ENCODE measurements at regions of chr12 and their contacts with region 1.

Region 1: DNA sequence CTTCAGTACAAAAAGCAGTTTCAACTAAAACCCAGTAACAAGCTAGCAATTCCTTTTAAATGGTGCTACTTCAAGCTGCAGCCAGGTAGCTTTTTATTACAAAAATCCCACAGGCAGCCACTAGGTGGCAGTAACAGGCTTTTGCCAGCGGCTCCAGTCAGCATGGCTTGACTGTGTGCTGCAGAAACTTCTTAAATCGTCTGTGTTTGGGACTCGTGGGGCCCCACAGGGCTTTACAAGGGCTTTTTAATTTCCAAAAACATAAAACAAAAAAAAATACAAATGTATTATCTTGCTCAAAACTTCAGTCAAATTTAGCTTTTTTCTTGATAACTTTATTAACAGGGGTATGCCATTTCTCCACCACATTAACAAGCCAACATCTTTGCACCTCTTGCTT is 3.6 kb upstream of the CLEC4E start:
- DNase-seq: peak; percentile 35
- ATAC-seq: peak; percentile 91
- H3K4me3 ChIP-seq: no peak overlapping the region
- H3K27ac ChIP-seq: no peak overlapping the region
- H3K4me1 ChIP-seq: no peaks in the 10 kb centered on the region
- H3K27me3 ChIP-seq: no peaks in the 10 kb centered on the region; the same call in 1 of the 2 replicates
- CTCF ChIP-seq: peak; percentile 49 to 88 (median 82); a peak in 5 of 6 replicates
- POLR2A ChIP-seq: no peak
- RAD21 ChIP-seq: peak; percentile 66

Region 2: GRCh38 chr12:7856516-7856915 is 687.8 kb before region 1 on chr12:
- CTCF ChIA-PET with region 1: no interaction called
- POLR2A ChIA-PET with region 1: no interaction called
- RAD21 ChIA-PET with region 1: no interaction called
- intact Hi-C with region 1: no loop called
- DNase-seq: no peak
- ATAC-seq: no peak
- H3K4me3 ChIP-seq: no peak overlapping the region
- H3K27ac ChIP-seq: no peak overlapping the region
- H3K4me1 ChIP-seq: peaks cover 0 to 23% of the 10 kb centered on the region in 2 experiments; a peak in 2 of 4 replicates
- H3K27me3 ChIP-seq: no peaks in the 10 kb centered on the region
- CTCF ChIP-seq: no peak
- POLR2A ChIP-seq: no peak
- RAD21 ChIP-seq: no peak

Region 3: GRCh38 chr12:8156845-8157244 is 387.4 kb before region 1 on chr12 and contains the start of gene ZNF705A:
- CTCF ChIA-PET with region 1: no interaction called
- POLR2A ChIA-PET with region 1: no interaction called
- RAD21 ChIA-PET with region 1: no interaction called
- intact Hi-C with region 1: no loop called
- DNase-seq: no peak
- ATAC-seq: no peak
- H3K4me3 ChIP-seq: no peak within 1 kb of the TSS
- H3K27ac ChIP-seq: no peak within 1 kb of the TSS
- H3K4me1 ChIP-seq: peaks cover 0 to 10% of the 10 kb centered on the region in 2 experiments; a peak in 2 of 4 replicates
- H3K27me3 ChIP-seq: no peaks in the 10 kb centered on the region
- CTCF ChIP-seq: no peak
- POLR2A ChIP-seq: no peak
- RAD21 ChIP-seq: no peak
- total RNA-seq, gene ZNF705A: not detected

Region 4: GRCh38 chr12:8499616-8500015 is 44.7 kb before region 1 on chr12:
- CTCF ChIA-PET with region 1: interaction called, 12 read pairs
- POLR2A ChIA-PET with region 1: no interaction called
- RAD21 ChIA-PET with region 1: no interaction called
- intact Hi-C with region 1: no loop called
- DNase-seq: no peak
- ATAC-seq: no peak
- H3K4me3 ChIP-seq: no peak overlapping the region
- H3K27ac ChIP-seq: no peak overlapping the region
- H3K4me1 ChIP-seq: no peaks in the 10 kb centered on the region
- H3K27me3 ChIP-seq: peaks cover 51% of the 10 kb centered on the region
- CTCF ChIP-seq: peak in 1 of 3 experiments; percentile 23; a peak in 1 of 6 replicates
- POLR2A ChIP-seq: no peak
- RAD21 ChIP-seq: no peak; the same call in 1 of the 2 replicates

Region 5: GRCh38 chr12:8554451-8555195 is 10.3 kb after region 1 on chr12:
- CTCF ChIA-PET with region 1: interaction called, 20 read pairs
- POLR2A ChIA-PET with region 1: no interaction called
- RAD21 ChIA-PET with region 1: no interaction called
- intact Hi-C with region 1: no loop called
- DNase-seq: no peak
- ATAC-seq: peak; percentile 14; the same call in 1 of the 2 replicates
- H3K4me3 ChIP-seq: no peak overlapping the region
- H3K27ac ChIP-seq: no peak overlapping the region
- H3K4me1 ChIP-seq: peaks cover 0 to 7% of the 10 kb centered on the region in 2 experiments; a peak in 2 of 4 replicates
- H3K27me3 ChIP-seq: no peaks in the 10 kb centered on the region
- CTCF ChIP-seq: no peak
- POLR2A ChIP-seq: no peak
- RAD21 ChIP-seq: no peak

Region 6: DNA sequence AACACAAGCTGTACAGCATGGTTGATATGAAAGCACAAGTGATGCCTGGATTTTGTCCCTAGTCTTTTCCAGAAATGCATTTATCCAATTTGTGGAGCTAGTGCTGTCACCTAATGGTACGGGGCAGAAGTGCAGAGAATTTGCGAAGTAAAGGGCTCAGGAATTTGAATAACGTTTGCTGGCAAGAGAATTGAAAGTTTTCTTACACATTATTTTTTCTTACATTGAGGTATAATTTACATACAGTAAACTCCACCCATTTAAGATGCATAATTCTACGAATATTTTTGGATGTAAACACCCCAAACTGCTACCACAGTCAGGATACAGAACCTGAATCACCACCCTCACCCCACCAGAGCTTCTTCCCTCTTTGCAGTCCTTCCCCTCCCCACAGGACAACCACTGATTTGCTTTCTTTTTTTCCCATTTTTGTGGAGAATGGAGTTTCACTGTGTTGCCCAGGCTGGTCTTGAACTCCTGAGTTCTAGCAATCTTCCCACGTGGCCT is 64.8 kb after region 1 on chr12:
- CTCF ChIA-PET with region 1: interaction called, 51 read pairs
- POLR2A ChIA-PET with region 1: no interaction called
- RAD21 ChIA-PET with region 1: interaction called, 10 to 12 read pairs
- intact Hi-C with region 1: loop called (anchors 2 kb)
- DNase-seq: peak; percentile 35
- ATAC-seq: peak; percentile 87
- H3K4me3 ChIP-seq: no peak overlapping the region
- H3K27ac ChIP-seq: no peak overlapping the region
- H3K4me1 ChIP-seq: no peaks in the 10 kb centered on the region
- H3K27me3 ChIP-seq: no peaks in the 10 kb centered on the region
- CTCF ChIP-seq: peak; percentile 64 to 86 (median 76)
- POLR2A ChIP-seq: no peak
- RAD21 ChIP-seq: peak; percentile 70

Region 7: GRCh38 chr12:8796831-8797626 is 252.7 kb after region 1 on chr12:
- CTCF ChIA-PET with region 1: no interaction called
- POLR2A ChIA-PET with region 1: no interaction called
- RAD21 ChIA-PET with region 1: no interaction called
- intact Hi-C with region 1: no loop called
- DNase-seq: no peak
- ATAC-seq: no peak
- H3K4me3 ChIP-seq: no peak overlapping the region
- H3K27ac ChIP-seq: no peak overlapping the region
- H3K4me1 ChIP-seq: no peaks in the 10 kb centered on the region
- H3K27me3 ChIP-seq: no peaks in the 10 kb centered on the region
- CTCF ChIP-seq: no peak
- POLR2A ChIP-seq: no peak
- RAD21 ChIP-seq: no peak

Region 8: DNA sequence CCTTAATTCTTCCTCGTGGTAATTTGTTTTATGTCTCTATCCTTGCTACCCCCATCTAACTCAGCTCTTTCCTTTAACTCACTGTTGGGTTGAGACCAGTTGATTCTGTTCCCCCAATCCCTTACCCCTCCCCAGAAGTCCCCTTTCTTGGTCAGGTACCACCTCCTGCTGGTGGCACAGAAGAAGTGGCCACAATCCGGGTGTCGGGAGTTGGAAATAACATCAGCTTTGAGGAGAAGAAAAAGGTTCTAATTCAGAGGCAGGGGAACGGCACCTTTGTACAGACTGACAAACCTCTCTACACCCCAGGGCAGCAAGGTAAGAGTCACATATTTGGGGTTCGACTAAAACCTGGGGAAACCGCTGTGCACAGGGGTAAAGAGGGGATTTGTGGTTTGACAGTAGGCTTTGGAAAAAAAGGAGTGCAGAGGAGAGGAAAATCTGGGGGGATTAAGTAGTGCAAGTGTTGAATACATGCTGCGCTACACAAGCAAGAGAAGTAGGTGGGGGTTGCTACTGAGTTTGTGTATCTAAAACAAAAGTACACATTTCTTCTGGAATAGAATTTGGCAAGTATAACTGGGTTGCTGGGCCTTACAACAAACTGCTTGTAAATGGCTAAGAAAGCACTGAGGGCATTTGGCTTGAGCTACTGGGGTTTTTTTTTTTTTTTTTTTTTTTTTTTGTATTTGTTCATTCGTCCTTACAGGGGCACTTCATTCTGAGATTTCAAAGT is 279.4 kb after region 1 on chr12:
- CTCF ChIA-PET with region 1: interaction called, 8 read pairs
- POLR2A ChIA-PET with region 1: no interaction called
- RAD21 ChIA-PET with region 1: no interaction called
- intact Hi-C with region 1: loop called (anchors 10 kb)
- DNase-seq: peak; percentile 6
- ATAC-seq: peak; percentile 81
- H3K4me3 ChIP-seq: no peak overlapping the region
- H3K27ac ChIP-seq: no peak overlapping the region
- H3K4me1 ChIP-seq: no peaks in the 10 kb centered on the region
- H3K27me3 ChIP-seq: no peaks in the 10 kb centered on the region
- CTCF ChIP-seq: peak; percentile 37 to 74 (median 63); a peak in 5 of 6 replicates
- POLR2A ChIP-seq: no peak
- RAD21 ChIP-seq: peak; percentile 66

Region 9: DNA sequence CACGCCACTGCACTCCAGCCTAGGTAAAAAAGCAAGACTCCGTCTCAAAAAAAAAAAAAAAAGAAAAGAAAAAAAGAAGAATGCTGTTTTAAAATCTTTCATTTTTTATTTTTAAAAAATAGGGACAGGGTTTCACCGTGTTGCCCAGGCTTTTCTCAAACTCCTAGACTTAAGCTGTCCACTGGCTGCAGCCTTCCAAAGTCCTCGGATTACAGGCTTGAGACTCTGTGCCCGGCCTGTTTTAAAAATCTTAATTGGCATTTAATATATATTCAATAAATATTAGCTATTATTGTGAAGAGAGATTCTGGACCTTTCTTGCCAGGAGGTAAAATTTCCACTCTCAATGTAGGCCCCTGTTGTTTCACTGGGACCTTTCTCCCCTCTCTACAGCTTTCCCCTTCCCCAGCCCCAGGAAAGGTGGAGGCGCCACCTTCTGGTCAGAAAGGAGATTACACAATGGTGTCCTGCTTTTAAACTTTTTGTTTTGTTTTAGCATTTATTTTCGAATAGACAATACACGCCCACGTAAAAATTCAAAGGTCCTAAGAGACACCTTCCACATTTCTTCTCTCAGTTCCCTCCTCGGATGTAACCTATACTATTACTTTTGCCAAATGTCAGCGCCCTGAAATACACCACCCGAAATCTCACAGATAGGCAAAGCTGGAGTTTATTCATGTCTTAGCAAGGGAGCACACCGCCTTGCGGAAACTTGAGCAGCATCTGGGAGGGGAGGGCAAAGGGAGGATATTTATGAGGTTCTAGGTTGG is 346.2 kb after region 1 on chr12:
- CTCF ChIA-PET with region 1: interaction called, 22 read pairs
- POLR2A ChIA-PET with region 1: no interaction called
- RAD21 ChIA-PET with region 1: no interaction called
- intact Hi-C with region 1: loop called (anchors 5 kb)
- DNase-seq: no peak
- ATAC-seq: peak; percentile 88
- H3K4me3 ChIP-seq: peak overlapping the region; percentile 44 to 55
- H3K27ac ChIP-seq: no peak overlapping the region
- H3K4me1 ChIP-seq: peaks cover 0 to 4% of the 10 kb centered on the region in 2 experiments; a peak in 1 of 4 replicates
- H3K27me3 ChIP-seq: no peaks in the 10 kb centered on the region
- CTCF ChIP-seq: peak; percentile 80 to 83 (median 82)
- POLR2A ChIP-seq: no peak
- RAD21 ChIP-seq: peak; percentile 72

Region 10: DNA sequence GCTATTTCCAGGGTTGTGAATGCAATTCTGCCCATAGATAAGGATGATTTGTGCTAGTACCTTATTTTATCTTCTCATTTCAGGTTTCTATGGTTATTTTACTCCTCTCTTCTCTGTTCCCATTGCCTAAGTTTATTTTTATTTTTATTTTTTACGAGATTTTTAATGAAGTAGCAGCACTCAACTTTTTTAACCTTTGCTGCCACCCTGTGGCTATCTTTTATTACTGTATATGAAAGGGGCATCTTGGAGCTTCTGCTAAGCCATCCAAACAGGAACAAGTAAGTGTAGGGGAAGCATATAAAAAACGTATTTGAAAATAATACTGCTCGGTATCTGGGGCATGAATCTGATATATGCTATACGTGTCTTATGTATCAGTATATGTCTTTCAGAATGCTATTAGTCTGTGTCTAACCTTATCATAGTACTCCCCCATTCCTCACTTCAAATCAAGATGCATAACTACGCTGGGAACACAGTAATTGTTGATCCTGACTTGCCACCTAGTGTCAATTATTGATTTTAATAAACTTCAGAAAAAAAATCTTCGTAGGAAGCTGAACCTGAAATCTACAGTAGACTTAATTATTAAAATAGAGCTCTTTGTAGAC is 505.3 kb after region 1 on chr12:
- CTCF ChIA-PET with region 1: interaction called, 28 read pairs
- POLR2A ChIA-PET with region 1: no interaction called
- RAD21 ChIA-PET with region 1: interaction called, 4 to 6 read pairs
- intact Hi-C with region 1: loop called (anchors 1 kb)
- DNase-seq: peak; percentile 48
- ATAC-seq: peak; percentile 91
- H3K4me3 ChIP-seq: no peak overlapping the region
- H3K27ac ChIP-seq: no peak overlapping the region
- H3K4me1 ChIP-seq: no peaks in the 10 kb centered on the region
- H3K27me3 ChIP-seq: peaks cover 6% of the 10 kb centered on the region; the same call in 1 of the 2 replicates
- CTCF ChIP-seq: peak; percentile 47 to 64 (median 63); a peak in 5 of 6 replicates
- POLR2A ChIP-seq: no peak
- RAD21 ChIP-seq: peak; percentile 65